ENCODE measurements at regions of chr10 and their contacts with region 1.

Region 1: DNA sequence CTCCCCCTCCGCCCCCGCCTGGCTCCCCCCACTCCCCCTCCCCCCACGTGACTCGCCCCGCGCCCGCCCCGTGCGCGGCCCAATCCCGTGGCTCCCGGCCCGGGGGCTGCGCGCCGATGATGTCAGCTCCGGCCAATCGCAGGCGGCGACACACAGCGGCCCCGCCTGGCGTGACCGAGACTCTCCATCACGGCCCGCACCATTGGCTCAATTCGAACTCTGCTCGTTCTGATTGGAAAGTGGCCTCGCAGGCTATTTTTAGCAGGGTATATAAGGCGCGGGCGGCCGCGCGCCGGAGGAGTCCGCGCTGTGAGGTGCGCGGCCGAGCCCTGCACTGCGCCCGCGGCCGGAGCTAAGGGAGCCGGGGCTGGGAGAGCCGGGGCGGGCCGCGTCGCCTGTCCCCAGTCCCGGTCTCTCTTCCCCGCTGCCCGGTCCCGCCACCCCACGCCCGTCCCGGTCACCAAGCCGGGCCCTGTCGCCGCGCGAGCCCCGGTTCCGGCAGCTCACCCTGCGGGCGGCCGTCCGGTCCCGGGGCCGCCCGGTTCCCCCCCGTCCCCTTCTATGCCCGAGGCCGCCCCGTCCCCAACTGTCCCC is 345 bp upstream of the KLF6 start:
- DNase-seq: peak; percentile 91
- ATAC-seq: peak; percentile 81
- H3K4me3 ChIP-seq: peak overlapping the region; percentile 89 to 91
- H3K27ac ChIP-seq: peak overlapping the region; percentile 98
- H3K4me1 ChIP-seq: peaks cover 35 to 63% of the 10 kb centered on the region in 2 experiments
- H3K27me3 ChIP-seq: no peaks in the 10 kb centered on the region
- CTCF ChIP-seq: no peak
- POLR2A ChIP-seq: peak; percentile 82
- RAD21 ChIP-seq: no peak

Region 2: DNA sequence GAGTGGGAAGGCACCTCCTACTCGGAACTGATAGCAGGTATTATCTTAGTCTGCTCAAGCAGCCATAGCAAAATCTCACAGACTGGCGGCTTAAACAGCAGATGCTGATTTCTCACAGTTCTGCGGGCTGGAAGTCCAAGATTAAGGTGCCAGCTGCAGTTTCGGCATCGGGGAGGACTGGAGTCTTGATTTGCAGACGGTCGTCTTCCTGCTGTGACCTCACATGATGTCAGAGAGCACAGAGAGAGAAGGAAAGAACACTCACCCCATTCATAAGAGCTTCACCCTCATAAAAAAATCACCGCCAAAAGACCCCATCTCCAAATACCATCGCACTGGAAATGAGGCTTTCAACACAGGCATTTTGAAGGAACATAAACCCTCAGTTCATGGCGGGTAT is 396.2 kb before region 1 on chr10:
- CTCF ChIA-PET with region 1: no interaction called
- POLR2A ChIA-PET with region 1: no interaction called
- RAD21 ChIA-PET with region 1: no interaction called
- intact Hi-C with region 1: no loop called
- DNase-seq: no peak
- ATAC-seq: no peak
- H3K4me3 ChIP-seq: no peak overlapping the region
- H3K27ac ChIP-seq: no peak overlapping the region
- H3K4me1 ChIP-seq: no peaks in the 10 kb centered on the region
- H3K27me3 ChIP-seq: no peaks in the 10 kb centered on the region
- CTCF ChIP-seq: no peak
- POLR2A ChIP-seq: no peak
- RAD21 ChIP-seq: no peak

Region 3: DNA sequence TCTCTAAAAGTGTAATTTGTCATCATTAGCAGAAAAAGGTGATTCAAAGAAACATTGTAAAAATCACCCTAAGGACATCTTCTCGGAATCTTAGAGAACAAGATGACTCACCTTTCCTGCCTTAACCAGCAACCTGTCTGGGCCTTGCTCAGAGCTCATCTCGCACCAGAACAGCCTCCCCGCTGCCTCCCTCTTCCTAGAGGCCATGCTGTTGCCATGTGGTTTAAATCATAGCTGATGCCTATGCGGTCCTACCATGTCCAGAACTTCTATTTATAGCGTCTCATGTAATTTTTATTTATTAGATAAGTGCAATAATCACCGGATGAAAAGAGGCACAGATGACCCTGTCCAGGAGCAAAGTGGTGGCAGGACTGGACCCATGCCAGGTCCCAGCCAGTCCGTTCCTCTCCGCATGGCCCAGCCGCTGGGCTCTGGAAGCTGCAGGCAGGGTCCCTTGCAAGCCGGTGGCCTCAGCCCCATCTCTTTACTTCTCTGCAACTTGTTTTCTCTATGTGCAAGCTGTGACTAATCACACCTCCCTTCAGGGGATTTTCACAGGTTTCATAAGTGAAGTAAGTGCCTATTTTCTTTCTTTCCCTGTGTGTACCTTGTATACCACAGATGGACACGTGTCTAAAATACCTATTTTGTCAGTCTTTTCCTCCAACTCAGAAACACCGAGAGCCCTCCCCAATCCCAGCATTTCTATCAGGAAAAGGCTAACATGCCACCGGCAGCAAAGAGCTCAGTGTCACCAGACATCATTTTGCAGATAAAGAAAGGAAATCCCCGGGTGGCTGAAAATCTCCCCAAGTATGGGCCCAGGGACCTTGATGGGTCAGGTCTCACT is 27.5 kb before region 1 on chr10:
- CTCF ChIA-PET with region 1: no interaction called
- POLR2A ChIA-PET with region 1: interaction called, 27 read pairs
- RAD21 ChIA-PET with region 1: no interaction called
- intact Hi-C with region 1: no loop called
- DNase-seq: no peak
- ATAC-seq: no peak
- H3K4me3 ChIP-seq: no peak overlapping the region
- H3K27ac ChIP-seq: no peak overlapping the region
- H3K4me1 ChIP-seq: peaks cover 36 to 70% of the 10 kb centered on the region in 2 experiments
- H3K27me3 ChIP-seq: no peaks in the 10 kb centered on the region
- CTCF ChIP-seq: no peak
- POLR2A ChIP-seq: no peak
- RAD21 ChIP-seq: no peak

Region 4: DNA sequence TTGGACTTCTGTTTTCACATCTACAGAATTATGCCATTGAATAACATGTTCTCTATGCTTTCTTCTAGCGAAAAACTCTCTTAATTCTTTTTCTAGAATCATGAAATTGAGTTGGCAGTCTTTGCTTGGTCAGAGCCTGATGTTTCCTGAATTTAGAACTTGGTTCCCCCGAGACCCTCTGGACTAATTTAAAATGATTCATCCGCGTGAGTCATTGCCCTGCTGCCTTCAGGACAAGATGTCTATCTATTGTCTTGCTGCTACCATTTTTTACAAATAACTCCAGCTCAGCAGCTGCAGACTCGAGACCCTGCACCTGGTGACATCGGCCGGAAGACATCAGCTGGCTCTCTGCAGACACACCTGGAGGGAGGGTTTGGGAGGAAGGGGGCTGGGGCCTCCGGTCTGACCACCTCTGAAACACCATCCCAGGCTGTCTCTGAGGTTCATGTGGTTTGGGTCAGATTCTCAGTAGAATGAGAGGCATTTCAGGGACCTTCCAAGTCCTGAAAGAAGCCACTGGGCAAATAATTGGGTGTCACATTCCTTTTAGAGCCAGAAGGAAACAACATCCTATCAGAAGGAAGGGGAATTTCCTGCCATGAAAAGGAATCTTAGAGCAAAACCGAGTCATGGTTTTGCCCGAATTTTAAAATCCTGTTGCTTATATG is 20.6 kb after region 1 on chr10:
- CTCF ChIA-PET with region 1: interaction called, 3 read pairs
- POLR2A ChIA-PET with region 1: interaction called, 83 read pairs
- RAD21 ChIA-PET with region 1: interaction called in 1 of 2 experiments, 3 read pairs
- intact Hi-C with region 1: loop called (anchors 2 kb)
- DNase-seq: peak; percentile 51
- ATAC-seq: peak; percentile 21
- H3K4me3 ChIP-seq: peak overlapping the region; percentile 15 to 29; a peak in 3 of 4 replicates
- H3K27ac ChIP-seq: peak overlapping the region; percentile 68
- H3K4me1 ChIP-seq: peaks cover 47 to 82% of the 10 kb centered on the region in 2 experiments
- H3K27me3 ChIP-seq: no peaks in the 10 kb centered on the region
- CTCF ChIP-seq: no peak
- POLR2A ChIP-seq: no peak
- RAD21 ChIP-seq: no peak

Region 5: DNA sequence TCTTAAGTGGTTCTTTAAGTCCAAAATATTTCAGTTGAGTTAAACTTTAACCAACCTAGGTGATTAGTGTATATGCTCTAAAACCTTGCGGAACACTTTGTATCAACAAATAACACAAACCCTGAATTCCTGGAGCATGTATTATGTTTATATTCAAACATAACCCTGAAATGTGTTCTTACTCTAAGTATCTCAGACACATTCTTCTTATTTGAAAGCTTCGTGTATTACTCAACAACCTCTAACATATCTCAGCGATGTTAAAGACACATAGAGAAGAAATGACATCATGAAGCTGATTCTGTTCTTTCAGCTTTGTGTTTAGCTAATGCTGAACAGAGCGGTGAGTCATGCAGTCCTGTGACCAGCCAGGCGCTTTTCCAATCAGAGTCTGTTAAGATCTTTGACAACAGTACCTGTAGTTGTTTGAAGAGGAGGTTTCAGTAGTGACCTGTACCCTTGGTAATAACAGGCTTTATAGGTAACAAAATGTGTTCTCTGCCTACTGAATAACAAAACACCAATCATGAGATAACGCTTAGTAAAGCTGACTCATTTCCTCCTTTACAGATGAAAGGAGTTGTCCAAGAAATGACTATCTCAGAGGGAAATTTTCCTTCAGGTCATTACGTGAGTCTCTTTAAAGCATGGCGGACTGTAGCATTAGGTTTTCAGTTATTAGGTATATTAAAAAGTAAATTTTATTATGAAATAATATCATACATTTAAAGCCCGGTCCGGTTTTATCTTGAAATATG is 67.0 kb after region 1 on chr10:
- CTCF ChIA-PET with region 1: no interaction called
- POLR2A ChIA-PET with region 1: interaction called, 39 read pairs
- RAD21 ChIA-PET with region 1: interaction called, 5 read pairs
- intact Hi-C with region 1: loop called (anchors 2 kb)
- DNase-seq: peak; percentile 99
- ATAC-seq: peak; percentile 95
- H3K4me3 ChIP-seq: peak overlapping the region in 1 of 2 experiments; percentile 23; a peak in 2 of 4 replicates
- H3K27ac ChIP-seq: peak overlapping the region; percentile 90
- H3K4me1 ChIP-seq: peaks cover 37 to 61% of the 10 kb centered on the region in 2 experiments
- H3K27me3 ChIP-seq: no peaks in the 10 kb centered on the region
- CTCF ChIP-seq: no peak
- POLR2A ChIP-seq: no peak
- RAD21 ChIP-seq: peak; percentile 47

Region 6: DNA sequence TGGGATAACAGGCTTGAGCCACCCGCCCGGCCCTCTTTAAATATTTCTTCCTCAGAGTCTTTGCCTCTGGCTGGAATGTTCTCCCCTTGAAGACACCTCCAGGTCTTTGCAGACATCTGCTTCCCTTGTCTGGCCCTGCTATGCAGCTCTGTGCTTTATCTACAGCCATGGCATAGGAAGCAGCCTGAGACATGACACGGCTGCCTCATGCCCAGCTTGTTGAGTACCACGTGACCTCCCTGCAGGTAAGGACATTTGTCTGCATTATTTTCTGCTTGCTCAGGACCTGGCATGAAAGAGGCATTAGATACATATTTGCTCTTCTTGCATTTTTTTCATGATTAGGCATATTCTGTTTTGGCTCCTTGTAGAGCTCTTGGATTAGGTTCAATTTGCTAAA is 113.5 kb after region 1 on chr10:
- CTCF ChIA-PET with region 1: no interaction called
- POLR2A ChIA-PET with region 1: interaction called, 12 read pairs
- RAD21 ChIA-PET with region 1: interaction called in 1 of 2 experiments, 6 read pairs
- intact Hi-C with region 1: no loop called
- DNase-seq: peak; percentile 34
- ATAC-seq: peak; percentile 74; the same call in 1 of the 2 replicates
- H3K4me3 ChIP-seq: no peak overlapping the region
- H3K27ac ChIP-seq: no peak overlapping the region
- H3K4me1 ChIP-seq: peaks cover 0 to 27% of the 10 kb centered on the region in 2 experiments; a peak in 2 of 4 replicates
- H3K27me3 ChIP-seq: no peaks in the 10 kb centered on the region
- CTCF ChIP-seq: no peak
- POLR2A ChIP-seq: no peak
- RAD21 ChIP-seq: no peak

Region 7: DNA sequence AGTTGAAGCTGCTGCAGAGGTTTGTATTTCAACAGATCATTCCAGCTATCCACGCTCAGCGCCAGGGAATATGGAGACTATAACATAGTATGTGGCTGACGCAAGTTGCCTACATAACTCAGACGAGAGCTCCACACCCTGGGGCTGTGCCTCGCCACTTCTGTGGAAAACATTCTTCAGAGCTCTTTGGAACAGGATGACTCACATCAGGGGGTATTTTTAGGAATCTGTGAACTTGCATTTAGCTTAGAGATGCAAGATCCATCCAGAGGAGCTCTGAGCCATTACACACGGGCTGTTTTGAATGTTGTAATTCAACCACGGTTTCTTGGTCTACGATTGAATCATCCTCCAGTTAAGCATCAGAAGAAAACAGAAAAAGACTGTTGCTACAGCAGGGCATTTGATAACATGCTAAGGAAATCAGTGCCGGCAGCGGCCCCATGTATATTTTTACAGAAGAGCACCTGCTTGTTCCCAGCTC is 559.2 kb after region 1 on chr10:
- CTCF ChIA-PET with region 1: no interaction called
- POLR2A ChIA-PET with region 1: interaction called, 11 read pairs
- RAD21 ChIA-PET with region 1: no interaction called
- intact Hi-C with region 1: no loop called
- DNase-seq: peak; percentile 89
- ATAC-seq: peak; percentile 92
- H3K4me3 ChIP-seq: peak overlapping the region in 1 of 2 experiments; percentile 24; a peak in 2 of 4 replicates
- H3K27ac ChIP-seq: peak overlapping the region; percentile 12; the same call in 1 of the 2 replicates
- H3K4me1 ChIP-seq: peaks cover 14 to 21% of the 10 kb centered on the region in 2 experiments
- H3K27me3 ChIP-seq: no peaks in the 10 kb centered on the region
- CTCF ChIP-seq: no peak
- POLR2A ChIP-seq: no peak
- RAD21 ChIP-seq: peak; percentile 39

Measured in HCT116 (cell line).